ENCODE measurements at regions of chr1 and their contacts with region 1.

Region 1: GRCh38 chr1:202117865-202118371 is 4.8 kb upstream of the GPR37L1 start:
- DNase-seq: no peak
- H3K4me3 Mint-ChIP-seq: no peak overlapping the region
- H3K27ac Mint-ChIP-seq: no peak overlapping the region
- H3K4me1 Mint-ChIP-seq: no peaks in the 10 kb centered on the region
- H3K27me3 Mint-ChIP-seq: peaks cover 24% of the 10 kb centered on the region

Region 2: GRCh38 chr1:201954263-201955008 is 163.5 kb before region 1 on chr1:
- CTCF ChIA-PET with region 1: no interaction called
- DNase-seq: peak; percentile 26
- H3K4me3 Mint-ChIP-seq: peak overlapping the region; percentile 95
- H3K27ac Mint-ChIP-seq: peak overlapping the region; percentile 91
- H3K4me1 Mint-ChIP-seq: peaks cover 24% of the 10 kb centered on the region
- H3K27me3 Mint-ChIP-seq: peaks cover 17% of the 10 kb centered on the region

Region 3: DNA sequence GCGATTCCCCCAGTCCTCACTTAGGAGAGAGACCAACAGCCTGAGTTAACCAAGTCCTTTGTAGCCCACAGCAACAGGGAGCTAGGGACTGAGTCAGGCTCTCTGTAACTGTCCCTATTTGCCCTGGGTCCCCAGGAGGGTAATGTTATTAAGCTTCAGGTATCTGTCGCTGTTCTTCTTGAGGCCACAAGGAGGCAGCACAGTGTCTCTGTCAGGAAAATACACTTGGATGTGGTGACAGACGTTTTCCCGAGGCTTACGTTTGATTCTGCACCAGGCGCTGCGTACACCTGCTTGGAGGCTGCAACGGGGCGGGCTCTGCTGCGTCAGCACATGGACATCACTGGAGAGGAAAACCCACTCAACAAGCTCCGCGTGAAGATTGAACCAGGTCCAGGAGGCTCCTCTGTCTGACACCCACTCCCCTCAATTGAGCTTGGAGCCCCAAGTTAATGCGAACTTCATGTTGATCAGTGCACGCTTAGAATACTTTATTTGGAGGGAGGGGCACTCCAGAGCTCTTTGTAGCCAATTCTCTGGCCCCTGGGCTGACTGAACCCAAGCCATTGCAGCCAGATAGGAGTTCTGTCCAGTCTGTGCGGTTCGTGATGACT is 118.2 kb before region 1 on chr1:
- CTCF ChIA-PET with region 1: interaction called, 13 read pairs
- DNase-seq: peak; percentile 48
- H3K4me3 Mint-ChIP-seq: no peak overlapping the region
- H3K27ac Mint-ChIP-seq: no peak overlapping the region
- H3K4me1 Mint-ChIP-seq: no peaks in the 10 kb centered on the region
- H3K27me3 Mint-ChIP-seq: no peaks in the 10 kb centered on the region